Activated CD4-positive, alpha-beta T cell treated with anti-CD3 and anti-CD28 coated beads, Interleukin-2, amount 10 ng/mL, durations not matched to agents 24 days and 14 days (primary cell): ENCODE measurements at regions of chr9 and their contacts with region 1.

Region 1: GRCh38 chr9:12723409-12724028 is 30.3 kb downstream of the TYRP1 start:
- DNase-seq: no peak
- H3K4me3 Mint-ChIP-seq: no peak overlapping the region
- H3K27ac Mint-ChIP-seq: no peak overlapping the region
- H3K4me1 Mint-ChIP-seq: no peaks in the 10 kb centered on the region
- H3K27me3 Mint-ChIP-seq: no peaks in the 10 kb centered on the region

Region 2: DNA sequence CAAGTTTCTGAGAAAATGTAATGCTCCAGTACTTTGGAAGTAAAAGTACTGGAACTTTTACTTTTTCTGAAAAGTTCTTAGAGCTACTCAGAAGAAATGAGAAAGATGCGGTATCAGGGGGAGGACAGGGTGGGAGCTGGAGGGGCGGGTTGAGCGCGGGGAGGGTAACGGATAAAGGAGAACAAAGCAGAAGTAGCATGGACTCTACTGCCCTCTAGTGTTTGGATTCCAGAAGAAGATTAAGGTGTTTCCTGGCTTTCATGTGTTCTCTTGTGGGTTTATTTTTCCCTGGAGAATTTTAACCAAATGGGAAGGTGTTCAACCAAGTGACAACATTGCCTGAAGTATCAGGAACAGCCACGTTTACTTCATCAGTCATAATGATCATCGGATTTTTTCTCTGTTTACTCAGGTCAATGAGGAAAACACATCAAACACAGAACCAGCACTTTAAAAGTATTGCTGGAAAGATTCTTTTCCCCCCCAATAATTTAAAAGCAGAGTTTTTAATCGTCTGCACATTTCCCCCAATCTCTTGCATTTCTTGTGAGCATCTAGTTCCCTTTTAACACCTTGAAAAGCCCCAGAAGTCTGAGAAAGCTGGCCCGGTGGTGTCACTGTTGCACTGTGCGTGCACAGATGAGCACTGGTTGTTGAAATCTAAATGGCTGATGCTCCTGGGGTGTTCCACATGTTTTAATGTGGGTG is 365.4 kb after region 1 on chr9:
- intact Hi-C with region 1: loop called (anchors 10 kb)
- DNase-seq: no peak
- H3K4me3 Mint-ChIP-seq: no peak overlapping the region
- H3K27ac Mint-ChIP-seq: no peak overlapping the region
- H3K4me1 Mint-ChIP-seq: no peaks in the 10 kb centered on the region
- H3K27me3 Mint-ChIP-seq: no peaks in the 10 kb centered on the region